Right ventricle myocardium inferior (tissue), 1 donor: ENCODE measurements at regions of chr11 and their contacts with region 1.

Region 1: DNA sequence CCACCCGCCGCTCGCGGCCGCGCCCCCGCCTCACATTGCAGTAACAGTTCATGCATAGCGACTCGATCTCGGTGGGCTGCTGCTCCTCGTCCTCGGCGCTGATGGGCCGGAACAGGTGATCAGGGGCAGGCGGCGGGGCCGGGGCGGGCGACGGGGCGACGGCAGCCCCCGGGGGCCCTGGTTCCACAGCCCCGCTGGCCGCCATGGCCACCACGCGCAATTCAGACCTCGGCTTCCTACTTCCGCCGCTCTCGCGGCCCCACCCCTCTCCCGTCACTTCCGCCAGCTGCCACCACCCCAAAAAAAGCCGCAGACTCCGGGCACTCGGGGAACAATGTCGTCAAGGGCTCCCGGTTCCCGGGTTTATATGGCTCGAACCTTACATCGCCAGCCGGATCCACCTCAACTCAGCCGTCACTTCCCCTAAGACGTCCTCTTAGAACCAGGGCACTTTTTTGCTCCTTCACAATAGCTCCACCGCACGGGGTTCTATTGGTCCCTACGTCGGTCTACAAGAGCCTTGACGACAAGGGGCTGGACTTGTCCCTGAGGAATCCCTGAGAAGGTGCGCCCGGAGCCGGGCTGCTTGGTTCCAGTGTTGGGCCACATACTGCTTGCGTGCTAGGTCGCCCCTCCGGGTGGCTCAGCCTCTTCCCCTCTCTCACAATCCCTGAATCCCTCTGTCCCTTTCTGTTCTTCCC is at the start of gene ZPR1:
- DNase-seq: peak; percentile 94
- ATAC-seq: peak; percentile 83
- total RNA-seq, gene ZPR1: 23.3 TPM

Region 2: DNA sequence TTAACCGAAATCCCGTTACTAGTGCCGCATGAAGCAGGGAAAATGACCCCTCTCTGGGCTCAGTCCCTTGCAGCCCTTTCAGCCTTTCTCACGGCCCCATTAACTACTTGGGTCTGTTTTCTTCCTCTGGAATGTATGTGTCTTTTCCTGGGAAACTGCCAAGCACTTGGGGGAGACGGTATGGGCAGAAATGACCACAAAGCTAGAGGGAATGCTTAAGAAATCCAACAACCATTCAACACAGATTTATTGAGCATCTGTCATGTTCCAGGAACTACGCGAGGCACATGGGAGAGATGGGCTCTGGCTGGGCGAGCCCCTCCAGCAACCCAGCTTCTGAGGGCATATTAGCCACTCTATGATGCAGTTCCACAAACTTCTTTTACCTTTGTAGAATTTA is 477.7 kb before region 1 on chr11:
- intact Hi-C with region 1: no loop called
- DNase-seq: no peak
- ATAC-seq: no peak

Region 3: DNA sequence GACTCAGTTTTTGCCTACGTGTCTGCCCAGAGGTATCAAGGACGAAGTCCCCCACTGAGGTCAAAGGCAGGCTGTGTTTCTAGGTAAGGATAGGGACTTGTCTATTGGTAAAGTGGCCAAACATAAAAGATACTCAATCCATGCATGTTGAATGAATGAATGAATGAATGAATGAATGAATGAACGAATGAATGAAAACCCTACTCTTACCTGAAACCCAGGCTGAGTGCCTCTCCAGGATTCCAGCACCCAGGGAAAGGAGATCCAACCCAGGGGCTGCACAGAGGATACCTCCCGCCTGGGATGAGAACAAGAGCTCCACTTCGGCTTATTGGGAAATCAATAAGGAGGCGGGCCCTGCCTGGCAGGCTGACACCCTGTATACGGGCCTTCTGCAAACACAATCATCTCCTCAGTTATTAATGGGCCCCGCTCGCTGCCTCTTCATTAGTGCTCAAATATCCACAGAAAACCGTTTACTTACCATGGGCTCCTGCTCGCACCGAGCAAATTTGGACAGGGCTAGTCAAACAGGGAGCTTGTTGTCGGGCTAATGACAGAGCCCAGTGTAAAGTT is 192.5 kb before region 1 on chr11:
- intact Hi-C with region 1: no loop called
- DNase-seq: no peak
- ATAC-seq: no peak

Region 4: GRCh38 chr11:116823031-116823843 is 35.3 kb after region 1 on chr11 and contains the start of gene APOA4:
- intact Hi-C with region 1: no loop called
- DNase-seq: no peak
- ATAC-seq: no peak
- total RNA-seq, gene APOA4: not detected

Region 5: GRCh38 chr11:116835791-116836631 is 48.1 kb after region 1 on chr11:
- intact Hi-C with region 1: loop called (anchors 2 kb)
- DNase-seq: peak; percentile 95
- ATAC-seq: peak; percentile 87